Panc1 (cell line): ENCODE measurements at regions of chr7 and their contacts with region 1.

Region 1: GRCh38 chr7:36884351-36884750 is 160.1 kb upstream of the AOAH start:
- DNase-seq: no peak
- ATAC-seq: no peak
- H3K4me3 ChIP-seq: no peak overlapping the region
- H3K27ac ChIP-seq: no peak overlapping the region
- H3K4me1 ChIP-seq: no peaks in the 10 kb centered on the region
- H3K27me3 ChIP-seq: no peaks in the 10 kb centered on the region
- CTCF ChIP-seq: no peak

Region 2: GRCh38 chr7:36573066-36573465 is 311.3 kb before region 1 on chr7:
- CTCF ChIA-PET with region 1: no interaction called
- POLR2A ChIA-PET with region 1: interaction called, 13 read pairs
- in situ Hi-C with region 1: no loop called
- intact Hi-C with region 1: no loop called
- DNase-seq: no peak
- ATAC-seq: no peak
- H3K4me3 ChIP-seq: no peak overlapping the region
- H3K27ac ChIP-seq: no peak overlapping the region
- H3K4me1 ChIP-seq: no peaks in the 10 kb centered on the region
- H3K27me3 ChIP-seq: no peaks in the 10 kb centered on the region
- CTCF ChIP-seq: no peak